Body of pancreas (tissue), 4 donors: ENCODE measurements at regions of chr1 and their contacts with region 1.

Region 1: DNA sequence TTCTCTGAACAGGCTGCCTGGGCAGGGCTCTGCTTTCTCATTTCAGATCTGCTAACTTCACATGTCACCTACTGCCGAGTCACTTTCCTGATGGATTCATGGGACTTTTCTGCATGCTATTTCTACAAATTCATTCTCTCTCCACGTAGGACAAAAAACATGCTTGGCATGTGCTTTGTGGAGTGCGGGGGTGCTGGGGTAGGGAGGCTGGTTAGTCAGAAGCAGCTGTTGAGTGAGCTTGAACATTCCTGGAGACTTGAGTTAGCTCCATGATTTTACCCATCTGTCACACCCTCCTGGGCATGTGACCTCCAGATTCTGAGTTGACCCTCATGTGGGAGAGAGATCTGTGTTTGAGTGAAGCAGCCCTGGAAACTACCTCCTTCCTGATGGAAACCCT is 71.4 kb downstream of the UCK2 start:
- DNase-seq: no peak
- ATAC-seq: no peak
- H3K4me3 ChIP-seq: no peak overlapping the region
- H3K27ac ChIP-seq: no peak overlapping the region
- H3K4me1 ChIP-seq: peaks cover 26% of the 10 kb centered on the region
- H3K27me3 ChIP-seq: no peaks in the 10 kb centered on the region
- CTCF ChIP-seq: no peak
- POLR2A ChIP-seq: no peak

Region 2: GRCh38 chr1:165836664-165837482 is 62.0 kb before region 1 on chr1:
- intact Hi-C with region 1: loop called (anchors 10 kb)
- DNase-seq: no peak
- ATAC-seq: no peak
- H3K4me3 ChIP-seq: no peak overlapping the region
- H3K27ac ChIP-seq: no peak overlapping the region
- H3K4me1 ChIP-seq: peaks cover 42% of the 10 kb centered on the region
- H3K27me3 ChIP-seq: no peaks in the 10 kb centered on the region
- CTCF ChIP-seq: no peak
- POLR2A ChIP-seq: no peak

Region 3: DNA sequence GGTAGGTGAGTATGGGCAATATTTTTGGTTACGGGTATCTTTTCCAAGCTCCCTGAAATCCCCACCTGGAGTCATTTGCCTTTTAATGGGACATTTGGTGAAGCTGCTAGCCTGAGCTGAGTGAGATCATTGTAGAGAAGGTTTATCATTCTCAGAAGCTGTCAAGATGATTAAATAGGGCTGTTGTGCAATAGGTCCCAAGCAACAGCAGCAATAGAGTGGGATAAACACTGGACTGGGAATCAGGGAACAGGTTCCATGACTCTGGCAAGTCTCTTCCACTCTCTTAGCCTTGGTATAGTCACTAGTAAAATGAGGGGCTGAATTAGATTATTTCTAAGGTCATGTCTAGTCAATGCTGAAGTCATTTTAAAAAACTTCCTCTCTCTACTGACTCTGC is 298.3 kb after region 1 on chr1:
- intact Hi-C with region 1: no loop called
- DNase-seq: peak; percentile 28 to 73 (median 32)
- ATAC-seq: peak; percentile 96
- H3K4me3 ChIP-seq: no peak overlapping the region
- H3K27ac ChIP-seq: peak overlapping the region in 2 of 4 donors; percentile 62 to 71
- H3K4me1 ChIP-seq: peaks cover 11% of the 10 kb centered on the region
- H3K27me3 ChIP-seq: no peaks in the 10 kb centered on the region
- CTCF ChIP-seq: no peak
- POLR2A ChIP-seq: no peak